CD8-positive, alpha-beta T cell (primary cell): ENCODE measurements at regions of chr4 and their contacts with region 1.

Region 1: DNA sequence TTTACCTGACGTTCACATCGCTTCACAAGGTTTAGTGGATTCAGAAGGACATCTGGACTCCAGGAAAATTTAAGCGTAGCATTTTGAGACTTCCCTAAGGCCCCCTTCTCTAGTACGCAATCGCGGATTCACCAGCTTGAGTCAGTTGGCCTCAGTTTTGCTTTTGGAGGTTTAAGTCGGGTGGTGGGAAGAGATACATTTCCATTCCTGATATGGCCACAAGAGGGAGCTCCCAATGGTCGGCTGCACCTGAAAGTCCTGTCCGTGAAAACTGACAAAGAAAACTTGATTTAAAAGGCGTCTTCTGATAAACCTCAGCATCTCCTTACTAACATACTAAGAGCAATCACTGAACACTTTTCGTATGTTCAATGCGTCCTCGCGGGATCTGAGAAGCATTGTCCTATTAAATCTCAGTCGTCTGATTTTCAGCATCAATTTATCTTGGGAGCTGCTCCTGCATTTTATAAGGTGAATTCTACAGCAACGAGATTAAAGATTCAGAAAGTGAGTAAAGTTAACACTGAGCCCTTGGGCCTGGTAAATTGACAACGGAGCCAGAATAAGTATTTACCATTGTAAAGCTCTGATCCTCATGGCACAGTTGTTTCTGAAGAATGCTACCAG is 50.6 kb downstream of the LGI2 start:
- DNase-seq: peak in 8 of 9 experiments; percentile 4 to 66 (median 42)
- ATAC-seq: no peak
- H3K4me3 ChIP-seq: no peak overlapping the region
- H3K4me3 Mint-ChIP-seq: peak overlapping the region; percentile 57
- H3K27ac ChIP-seq: no peak overlapping the region
- H3K27ac Mint-ChIP-seq: no peak overlapping the region
- H3K4me1 ChIP-seq: peaks cover 2% of the 10 kb centered on the region
- H3K4me1 Mint-ChIP-seq: peaks cover 6% of the 10 kb centered on the region
- H3K27me3 ChIP-seq: no peaks in the 10 kb centered on the region
- H3K27me3 Mint-ChIP-seq: peaks cover 17% of the 10 kb centered on the region
- CTCF ChIP-seq: peak; percentile 78

Region 2: DNA sequence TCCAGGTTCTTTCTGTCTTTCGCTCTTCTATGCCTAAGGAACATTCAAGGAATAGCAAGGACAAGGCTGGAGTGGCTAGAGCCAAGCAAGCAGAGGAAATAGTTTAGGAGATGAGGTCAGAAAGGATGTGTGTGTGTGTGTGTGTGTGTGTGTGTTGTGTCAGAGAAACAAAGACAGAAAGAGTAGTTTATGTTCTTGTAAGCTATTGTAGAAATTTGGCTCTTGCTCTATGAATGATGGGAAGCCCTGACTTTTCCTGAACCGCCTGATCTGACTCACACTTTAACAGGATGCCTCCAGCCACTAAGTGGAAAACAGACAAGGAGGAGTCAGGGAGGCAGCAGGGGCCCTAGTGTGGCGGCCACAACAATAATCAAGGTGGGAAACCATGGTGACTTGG is 10.8 kb after region 1 on chr4:
- CTCF ChIA-PET with region 1: interaction called, 24 read pairs
- POLR2A ChIA-PET with region 1: no interaction called
- intact Hi-C with region 1: no loop called
- DNase-seq: no peak
- ATAC-seq: no peak
- H3K4me3 ChIP-seq: no peak overlapping the region
- H3K4me3 Mint-ChIP-seq: no peak overlapping the region
- H3K27ac ChIP-seq: no peak overlapping the region
- H3K27ac Mint-ChIP-seq: no peak overlapping the region
- H3K4me1 ChIP-seq: no peaks in the 10 kb centered on the region
- H3K4me1 Mint-ChIP-seq: no peaks in the 10 kb centered on the region
- H3K27me3 ChIP-seq: peaks cover 0 to 2% of the 10 kb centered on the region in 2 experiments
- H3K27me3 Mint-ChIP-seq: peaks cover 7% of the 10 kb centered on the region
- CTCF ChIP-seq: no peak

Region 3: DNA sequence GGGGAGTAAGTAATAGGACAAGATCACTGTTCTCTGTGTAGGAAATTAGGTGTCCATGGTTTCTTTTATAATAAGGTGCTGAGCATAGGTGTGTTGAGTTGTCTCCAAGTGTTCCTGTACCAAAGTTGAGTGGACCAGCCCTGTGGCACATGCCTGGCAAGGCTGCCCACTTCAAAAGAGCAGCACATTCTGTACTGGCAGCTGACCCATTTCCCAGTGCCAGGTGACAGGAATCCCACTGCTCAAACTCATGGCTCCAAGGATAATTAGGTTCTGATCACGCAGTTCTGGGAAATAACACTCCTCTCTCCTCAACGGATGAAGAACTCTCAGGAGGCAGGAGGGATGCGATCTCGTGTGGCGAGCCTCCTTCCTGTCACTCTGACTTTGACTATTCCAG is 63.4 kb after region 1 on chr4:
- CTCF ChIA-PET with region 1: no interaction called
- POLR2A ChIA-PET with region 1: no interaction called
- intact Hi-C with region 1: no loop called
- DNase-seq: no peak
- ATAC-seq: no peak
- H3K4me3 ChIP-seq: no peak overlapping the region
- H3K4me3 Mint-ChIP-seq: no peak overlapping the region
- H3K27ac ChIP-seq: no peak overlapping the region
- H3K27ac Mint-ChIP-seq: no peak overlapping the region
- H3K4me1 ChIP-seq: no peaks in the 10 kb centered on the region
- H3K4me1 Mint-ChIP-seq: no peaks in the 10 kb centered on the region
- H3K27me3 ChIP-seq: no peaks in the 10 kb centered on the region
- H3K27me3 Mint-ChIP-seq: peaks cover 16% of the 10 kb centered on the region
- CTCF ChIP-seq: no peak

Region 4: GRCh38 chr4:25180524-25181131 is 200.5 kb after region 1 on chr4:
- CTCF ChIA-PET with region 1: no interaction called
- POLR2A ChIA-PET with region 1: no interaction called
- intact Hi-C with region 1: no loop called
- DNase-seq: peak in 5 of 9 experiments; percentile 27 to 69 (median 40)
- ATAC-seq: peak; percentile 80
- H3K4me3 ChIP-seq: no peak overlapping the region
- H3K4me3 Mint-ChIP-seq: no peak overlapping the region
- H3K27ac ChIP-seq: no peak overlapping the region
- H3K27ac Mint-ChIP-seq: no peak overlapping the region
- H3K4me1 ChIP-seq: peaks cover 16% of the 10 kb centered on the region
- H3K4me1 Mint-ChIP-seq: peaks cover 18% of the 10 kb centered on the region
- H3K27me3 ChIP-seq: no peaks in the 10 kb centered on the region
- H3K27me3 Mint-ChIP-seq: no peaks in the 10 kb centered on the region
- CTCF ChIP-seq: peak; percentile 89

Region 5: DNA sequence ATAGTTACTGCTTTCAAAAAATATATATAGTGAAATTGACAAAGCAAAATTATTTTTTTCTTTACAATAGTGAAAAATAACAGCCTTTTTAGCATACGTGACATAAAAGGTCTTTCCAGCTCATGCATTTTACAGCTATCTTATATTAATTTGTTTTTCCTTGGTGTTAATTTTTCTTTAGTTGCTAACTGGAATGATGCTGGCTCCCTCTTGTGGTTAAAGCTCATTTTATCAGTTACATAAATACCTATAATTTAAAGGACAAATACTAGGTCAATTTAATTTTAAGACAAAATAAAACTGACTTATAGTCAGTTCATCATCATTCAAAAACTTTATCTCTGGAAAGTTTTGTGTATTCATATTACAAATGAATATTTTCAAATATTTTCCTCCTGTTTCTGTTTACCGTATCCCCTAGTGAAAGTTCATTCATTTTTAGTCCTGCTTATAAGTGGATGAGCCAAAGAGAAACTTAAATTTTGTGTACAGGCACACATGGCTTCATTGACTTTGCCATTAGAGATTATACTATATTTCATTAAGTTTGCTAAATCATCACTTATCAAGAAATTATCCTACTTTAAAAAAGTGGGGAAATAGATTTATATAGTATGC is 386.9 kb after region 1 on chr4:
- CTCF ChIA-PET with region 1: interaction called, 19 read pairs
- POLR2A ChIA-PET with region 1: no interaction called
- intact Hi-C with region 1: loop called in 1 of 2 experiments (anchors 1 kb)
- DNase-seq: peak in 2 of 9 experiments; percentile 45 to 59
- ATAC-seq: no peak
- H3K4me3 ChIP-seq: no peak overlapping the region
- H3K4me3 Mint-ChIP-seq: no peak overlapping the region
- H3K27ac ChIP-seq: no peak overlapping the region
- H3K27ac Mint-ChIP-seq: no peak overlapping the region
- H3K4me1 ChIP-seq: no peaks in the 10 kb centered on the region
- H3K4me1 Mint-ChIP-seq: no peaks in the 10 kb centered on the region
- H3K27me3 ChIP-seq: no peaks in the 10 kb centered on the region
- H3K27me3 Mint-ChIP-seq: no peaks in the 10 kb centered on the region
- CTCF ChIP-seq: peak; percentile 65

Region 6: DNA sequence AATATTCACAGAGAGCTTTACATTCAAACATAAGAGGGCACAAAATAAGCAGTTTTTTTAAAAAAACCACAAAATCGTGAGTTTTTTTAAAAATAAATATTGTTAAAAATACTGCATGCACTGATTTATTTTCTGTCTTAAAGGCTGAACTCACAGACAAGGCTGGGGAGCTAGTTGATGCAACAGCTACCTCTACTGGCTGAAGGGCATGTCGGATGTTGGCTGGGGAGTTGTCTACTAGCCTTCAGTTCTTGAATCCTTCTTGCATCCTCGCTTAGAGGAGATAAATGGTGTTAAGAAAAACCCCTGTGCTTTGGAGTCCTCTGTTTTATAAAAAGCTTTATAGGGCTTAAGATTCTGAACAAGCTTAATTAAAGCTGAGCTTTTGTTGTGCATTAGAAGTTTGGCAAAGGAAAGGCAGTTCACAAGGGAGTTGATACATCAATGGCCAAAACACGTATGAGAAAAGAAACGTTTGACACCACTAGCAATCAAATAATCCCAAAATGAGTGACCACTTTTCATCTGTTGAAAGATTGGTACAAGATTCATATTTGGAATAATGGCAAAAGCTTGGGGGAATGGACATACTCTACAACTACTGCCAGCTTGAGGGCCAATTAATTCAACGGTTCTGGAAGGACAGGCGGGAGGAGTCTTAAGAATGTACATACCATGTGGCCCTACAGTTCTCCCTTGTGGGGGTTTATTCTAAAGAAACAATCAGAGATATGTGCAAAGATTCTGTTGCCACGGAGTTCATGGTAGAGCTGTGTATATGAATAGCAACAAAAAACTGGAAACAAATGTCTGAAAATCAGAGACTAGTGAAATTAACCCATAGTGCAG is 787.9 kb after region 1 on chr4:
- CTCF ChIA-PET with region 1: no interaction called
- POLR2A ChIA-PET with region 1: no interaction called
- intact Hi-C with region 1: loop called in 1 of 2 experiments (anchors 10 kb)
- DNase-seq: peak in 2 of 9 experiments; percentile 40 to 58
- ATAC-seq: no peak
- H3K4me3 ChIP-seq: no peak overlapping the region
- H3K4me3 Mint-ChIP-seq: no peak overlapping the region
- H3K27ac ChIP-seq: no peak overlapping the region
- H3K27ac Mint-ChIP-seq: no peak overlapping the region
- H3K4me1 ChIP-seq: no peaks in the 10 kb centered on the region
- H3K4me1 Mint-ChIP-seq: no peaks in the 10 kb centered on the region
- H3K27me3 ChIP-seq: no peaks in the 10 kb centered on the region
- H3K27me3 Mint-ChIP-seq: no peaks in the 10 kb centered on the region
- CTCF ChIP-seq: no peak